HEK293 (cell line): ENCODE measurements at regions of chr3 and their contacts with region 1.

Region 1: GRCh38 chr3:39541917-39542329 is 74.4 kb downstream of the MOBP start:
- H3K4me3 ChIP-seq: no peak overlapping the region
- H3K27ac ChIP-seq: no peak overlapping the region
- H3K4me1 ChIP-seq: no peaks in the 10 kb centered on the region
- CTCF ChIP-seq: no peak

Region 2: DNA sequence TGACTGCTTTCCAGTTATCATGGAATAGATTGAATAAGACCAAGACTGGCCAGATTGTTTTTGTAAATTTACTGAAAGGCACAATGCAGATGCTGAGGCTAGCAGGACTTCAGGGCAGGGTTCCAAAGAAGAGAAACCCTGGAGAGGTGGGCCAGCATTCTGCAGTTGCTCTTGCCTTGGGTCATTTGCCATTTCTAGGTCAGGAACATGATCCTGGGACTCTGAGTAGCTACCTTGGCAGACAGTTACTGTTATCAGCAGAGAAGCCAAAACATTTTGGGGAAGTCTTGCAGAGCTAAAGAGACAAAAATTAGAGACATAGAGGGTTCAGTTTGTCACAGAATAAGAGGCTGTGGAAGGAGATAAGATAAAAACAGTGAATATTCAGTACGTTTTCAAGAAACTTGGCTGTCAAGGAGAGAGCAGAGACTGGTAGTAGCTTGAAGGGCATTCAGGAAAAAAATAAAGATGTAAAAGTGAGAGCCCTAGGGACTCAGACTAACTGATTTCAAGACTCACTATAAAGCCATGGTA is 220.7 kb after region 1 on chr3:
- CTCF ChIA-PET with region 1: no interaction called
- POLR2A ChIA-PET with region 1: no interaction called
- H3K4me3 ChIP-seq: no peak overlapping the region
- H3K27ac ChIP-seq: no peak overlapping the region
- H3K4me1 ChIP-seq: no peaks in the 10 kb centered on the region
- CTCF ChIP-seq: no peak

Region 3: GRCh38 chr3:40179016-40179415 is 637.1 kb after region 1 on chr3:
- CTCF ChIA-PET with region 1: interaction called, 14 read pairs
- POLR2A ChIA-PET with region 1: no interaction called
- H3K4me3 ChIP-seq: no peak overlapping the region
- H3K27ac ChIP-seq: no peak overlapping the region
- H3K4me1 ChIP-seq: no peaks in the 10 kb centered on the region
- CTCF ChIP-seq: 0 out of 2 replicates have a peak, but pooled peaks have one; percentile 34